Activated CD4-positive, alpha-beta T cell treated with anti-CD3 and anti-CD28 coated beads for 36 hours (primary cell): ENCODE measurements at regions of chr16 and their contacts with region 1.

Region 1: GRCh38 chr16:12819126-12820117 is 15.7 kb upstream of the CPPED1 start:
- DNase-seq: peak; percentile 88
- ATAC-seq: peak; percentile 72
- H3K4me3 Mint-ChIP-seq: no peak overlapping the region
- H3K27ac Mint-ChIP-seq: no peak overlapping the region
- H3K4me1 Mint-ChIP-seq: peaks cover 11% of the 10 kb centered on the region
- H3K27me3 Mint-ChIP-seq: no peaks in the 10 kb centered on the region

Region 2: DNA sequence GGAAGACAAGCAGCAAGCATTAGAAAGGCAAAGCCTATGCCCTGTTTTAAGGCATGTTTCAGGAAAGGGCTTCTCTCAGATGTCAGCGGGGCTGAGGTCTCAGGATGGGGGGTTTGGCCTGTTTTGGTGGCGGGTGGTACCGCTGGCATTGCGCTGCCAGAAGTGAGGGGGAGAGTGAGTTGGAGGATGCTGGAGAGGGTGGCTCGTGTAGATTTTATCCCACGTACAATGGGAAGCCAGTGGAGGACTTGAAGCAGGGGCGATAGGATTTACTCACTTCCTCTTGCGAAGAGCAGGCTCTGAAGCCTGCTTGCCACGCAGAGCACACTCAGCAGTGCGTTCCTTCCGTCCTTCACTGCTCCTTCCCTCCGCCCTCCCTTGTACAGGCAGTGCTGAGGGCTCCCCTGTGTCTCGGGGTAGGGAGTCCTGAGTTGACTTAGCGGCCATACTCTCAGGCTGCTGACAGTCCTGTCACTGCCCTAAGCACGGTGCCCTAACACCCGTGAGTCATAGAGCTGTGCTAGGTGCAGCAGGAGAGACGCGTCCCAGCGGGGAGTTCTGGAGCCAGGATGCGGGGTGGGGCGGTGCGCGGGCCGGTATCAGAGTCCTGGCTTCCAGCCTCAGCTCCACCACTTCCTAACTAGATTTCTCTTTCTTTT is 729.8 kb before region 1 on chr16:
- CTCF ChIA-PET with region 1: interaction called, 10 read pairs
- POLR2A ChIA-PET with region 1: no interaction called
- intact Hi-C with region 1: loop called in 1 of 2 experiments (anchors 5 kb)
- DNase-seq: peak; percentile 71
- ATAC-seq: peak; percentile 96
- H3K4me3 Mint-ChIP-seq: peak overlapping the region; percentile 64
- H3K27ac Mint-ChIP-seq: peak overlapping the region; percentile 89
- H3K4me1 Mint-ChIP-seq: peaks cover 40% of the 10 kb centered on the region
- H3K27me3 Mint-ChIP-seq: no peaks in the 10 kb centered on the region

Region 3: GRCh38 chr16:12228602-12229499 is 590.6 kb before region 1 on chr16:
- CTCF ChIA-PET with region 1: no interaction called
- POLR2A ChIA-PET with region 1: no interaction called
- intact Hi-C with region 1: loop called in 1 of 2 experiments (anchors 5 kb)
- DNase-seq: peak; percentile 68
- ATAC-seq: peak; percentile 77
- H3K4me3 Mint-ChIP-seq: no peak overlapping the region
- H3K27ac Mint-ChIP-seq: peak overlapping the region; percentile 43
- H3K4me1 Mint-ChIP-seq: peaks cover 17% of the 10 kb centered on the region
- H3K27me3 Mint-ChIP-seq: no peaks in the 10 kb centered on the region

Region 4: GRCh38 chr16:12455287-12455798 is 364.1 kb before region 1 on chr16:
- CTCF ChIA-PET with region 1: interaction called, 5 read pairs
- POLR2A ChIA-PET with region 1: no interaction called
- intact Hi-C with region 1: loop called (anchors 1 kb)
- DNase-seq: peak; percentile 74
- ATAC-seq: peak; percentile 71
- H3K4me3 Mint-ChIP-seq: no peak overlapping the region
- H3K27ac Mint-ChIP-seq: no peak overlapping the region
- H3K4me1 Mint-ChIP-seq: peaks cover 29% of the 10 kb centered on the region
- H3K27me3 Mint-ChIP-seq: no peaks in the 10 kb centered on the region

Region 5: GRCh38 chr16:12590963-12591362 is 228.5 kb before region 1 on chr16:
- CTCF ChIA-PET with region 1: no interaction called
- POLR2A ChIA-PET with region 1: no interaction called
- intact Hi-C with region 1: loop called in 1 of 2 experiments (anchors 5 kb)
- DNase-seq: no peak
- ATAC-seq: peak; percentile 88
- H3K4me3 Mint-ChIP-seq: no peak overlapping the region
- H3K27ac Mint-ChIP-seq: peak overlapping the region; percentile 72
- H3K4me1 Mint-ChIP-seq: peaks cover 15% of the 10 kb centered on the region
- H3K27me3 Mint-ChIP-seq: peaks cover 18% of the 10 kb centered on the region

Region 6: DNA sequence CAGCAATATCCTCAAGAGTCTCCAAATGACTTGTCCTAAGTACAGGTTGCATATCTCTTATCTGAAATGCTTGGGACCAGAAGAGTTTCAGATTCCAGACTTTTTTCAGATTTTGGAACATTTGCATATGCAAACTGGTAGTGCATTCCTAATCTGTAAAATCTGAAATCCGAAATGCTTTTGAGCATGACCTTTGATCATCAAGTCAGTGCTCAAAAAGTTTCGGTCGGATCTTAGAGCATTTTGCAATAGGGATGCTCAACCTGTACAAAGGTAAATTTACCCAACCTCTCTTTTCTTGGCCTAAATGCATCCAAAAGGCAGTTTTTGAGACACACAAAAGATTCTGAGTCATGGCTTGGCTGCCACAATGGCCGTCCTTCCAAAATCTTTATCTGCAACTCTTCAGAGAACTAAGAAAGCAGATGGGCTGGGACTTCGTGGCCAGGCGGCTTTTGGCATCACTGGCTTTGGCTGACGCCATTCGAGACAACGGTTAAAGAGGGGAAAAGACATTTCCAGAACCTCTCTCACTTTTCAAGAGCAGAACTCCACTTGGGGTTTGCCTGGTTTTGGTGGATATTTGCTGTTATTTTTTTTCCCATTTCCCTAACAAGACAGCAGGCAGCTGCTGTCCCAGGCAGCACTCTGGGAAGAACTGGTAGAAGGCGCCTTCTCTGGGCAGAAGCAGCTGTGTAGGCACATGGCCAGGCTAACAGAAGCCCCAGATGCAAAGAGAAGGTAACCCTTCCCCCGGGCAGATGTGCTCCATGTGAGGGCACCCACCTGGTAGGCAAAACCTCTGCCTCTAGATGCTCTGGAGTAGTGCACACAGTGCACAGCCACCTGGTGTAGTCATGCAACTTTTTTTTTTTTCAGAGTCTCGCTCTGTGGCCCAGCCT is 24.7 kb before region 1 on chr16:
- CTCF ChIA-PET with region 1: no interaction called
- POLR2A ChIA-PET with region 1: no interaction called
- intact Hi-C with region 1: no loop called
- DNase-seq: no peak
- ATAC-seq: no peak
- H3K4me3 Mint-ChIP-seq: no peak overlapping the region
- H3K27ac Mint-ChIP-seq: no peak overlapping the region
- H3K4me1 Mint-ChIP-seq: no peaks in the 10 kb centered on the region
- H3K27me3 Mint-ChIP-seq: no peaks in the 10 kb centered on the region